GM10248 (cell line): ENCODE measurements at regions of chr5 and their contacts with region 1.

Region 1: DNA sequence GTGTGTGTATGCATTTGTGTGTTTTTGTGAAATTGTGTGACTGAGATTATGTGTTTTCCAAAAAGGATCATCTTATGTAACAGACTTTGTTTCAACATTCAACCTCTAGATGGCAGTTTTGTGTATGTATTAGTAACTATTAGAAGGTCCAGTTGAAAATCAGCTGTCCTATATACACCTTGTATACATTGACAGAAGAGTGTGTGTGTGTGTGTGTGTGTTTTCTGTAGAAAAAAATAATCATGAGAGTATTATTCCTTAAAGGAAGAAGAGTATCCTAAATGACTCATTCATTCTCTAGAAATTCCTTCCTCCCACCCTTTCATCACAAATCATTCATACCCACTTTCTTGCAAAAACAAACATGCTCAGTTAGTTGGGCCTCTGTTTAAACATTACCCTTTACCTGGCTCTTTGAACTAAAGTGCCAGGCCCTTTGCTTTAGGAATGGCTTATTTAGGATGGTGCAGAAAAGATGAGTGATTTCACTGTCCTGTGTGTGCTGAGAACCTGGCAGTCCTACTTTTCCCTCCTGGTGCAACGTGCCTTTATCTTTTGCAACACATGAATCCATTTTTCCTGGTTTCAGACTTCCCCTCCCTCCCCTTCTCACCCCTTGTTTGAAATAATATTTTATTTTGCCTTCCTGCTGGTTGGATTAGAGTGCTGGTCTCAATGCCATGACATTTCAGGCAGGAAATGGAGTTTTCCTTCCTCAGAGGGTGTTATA is 152.2 kb downstream of the ARHGAP26 start:
- DNase-seq: peak; percentile 49
- CTCF ChIP-seq: peak; percentile 44

Region 2: DNA sequence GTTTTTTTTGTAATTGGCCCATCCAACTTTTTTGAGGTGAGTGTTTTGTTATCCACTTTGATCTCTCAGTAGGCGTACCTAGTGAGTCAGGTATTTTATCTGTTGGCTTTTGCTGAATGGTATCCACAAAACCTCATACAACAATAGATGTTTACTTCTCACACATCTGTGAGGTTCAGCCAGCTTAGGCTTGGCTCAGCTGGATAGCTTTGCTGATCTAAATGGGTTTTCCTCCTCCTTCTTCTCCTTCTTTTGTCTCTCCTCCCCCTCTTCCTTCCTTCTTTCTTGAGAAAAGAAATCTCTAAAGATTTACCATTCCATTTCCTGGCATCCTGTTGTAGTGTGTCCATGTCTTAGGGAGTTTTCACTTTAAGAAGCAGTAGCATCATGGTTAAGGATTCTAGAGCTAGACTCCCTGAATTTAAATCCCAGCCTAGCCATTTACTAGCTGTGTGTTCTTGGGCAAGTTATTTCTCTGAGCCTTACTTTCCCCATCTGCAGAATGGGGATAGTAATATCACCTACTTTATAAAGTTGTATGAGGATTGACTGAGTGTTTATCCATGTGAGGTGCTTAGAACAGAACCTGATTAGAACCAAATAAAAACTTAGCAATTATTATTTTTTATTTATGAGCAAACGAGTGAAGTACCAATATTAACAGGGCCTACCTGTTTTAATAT is 25.9 kb before region 1 on chr5:
- CTCF ChIA-PET with region 1: no interaction called
- POLR2A ChIA-PET with region 1: no interaction called
- DNase-seq: no peak
- CTCF ChIP-seq: no peak

Region 3: GRCh38 chr5:142938266-142938880 is 16.0 kb after region 1 on chr5:
- CTCF ChIA-PET with region 1: interaction called, 13 read pairs
- POLR2A ChIA-PET with region 1: no interaction called
- DNase-seq: no peak
- CTCF ChIP-seq: no peak

Region 4: DNA sequence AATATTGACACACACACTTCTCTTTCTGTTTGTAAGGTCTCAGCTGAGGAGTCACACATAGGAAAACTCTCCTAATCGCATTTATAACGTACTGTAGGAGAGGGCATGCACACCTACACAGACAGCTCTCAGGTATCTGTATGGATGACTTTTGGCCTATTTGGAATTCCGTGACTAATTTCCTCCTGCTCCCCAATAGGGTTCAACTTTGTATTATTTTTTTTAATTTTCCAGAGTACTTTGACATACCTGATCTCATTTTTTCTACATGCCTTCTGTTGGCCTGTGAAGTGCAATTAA is 43.7 kb after region 1 on chr5:
- CTCF ChIA-PET with region 1: interaction called, 18 read pairs
- POLR2A ChIA-PET with region 1: no interaction called
- DNase-seq: no peak
- CTCF ChIP-seq: no peak

Region 5: GRCh38 chr5:143355720-143356119 is 433.3 kb after region 1 on chr5:
- CTCF ChIA-PET with region 1: no interaction called
- POLR2A ChIA-PET with region 1: no interaction called
- DNase-seq: no peak
- CTCF ChIP-seq: no peak

Region 6: GRCh38 chr5:143968011-143968878 is 1045.9 kb after region 1 on chr5:
- CTCF ChIA-PET with region 1: interaction called, 25 read pairs
- POLR2A ChIA-PET with region 1: no interaction called
- DNase-seq: peak; percentile 37
- CTCF ChIP-seq: peak; percentile 56